ENCODE measurements at regions of chr21 and their contacts with region 1.

Region 1: GRCh38 chr21:16407403-16408240 is 677.8 kb downstream of the USP25 start:
- DNase-seq: no peak
- H3K4me3 ChIP-seq: no peak overlapping the region
- H3K4me3 Mint-ChIP-seq: no peak overlapping the region
- H3K27ac Mint-ChIP-seq: no peak overlapping the region
- H3K4me1 ChIP-seq: no peaks in the 10 kb centered on the region
- H3K4me1 Mint-ChIP-seq: no peaks in the 10 kb centered on the region
- H3K27me3 ChIP-seq: no peaks in the 10 kb centered on the region
- H3K27me3 Mint-ChIP-seq: peaks cover 11% of the 10 kb centered on the region
- CTCF ChIP-seq: no peak

Region 2: DNA sequence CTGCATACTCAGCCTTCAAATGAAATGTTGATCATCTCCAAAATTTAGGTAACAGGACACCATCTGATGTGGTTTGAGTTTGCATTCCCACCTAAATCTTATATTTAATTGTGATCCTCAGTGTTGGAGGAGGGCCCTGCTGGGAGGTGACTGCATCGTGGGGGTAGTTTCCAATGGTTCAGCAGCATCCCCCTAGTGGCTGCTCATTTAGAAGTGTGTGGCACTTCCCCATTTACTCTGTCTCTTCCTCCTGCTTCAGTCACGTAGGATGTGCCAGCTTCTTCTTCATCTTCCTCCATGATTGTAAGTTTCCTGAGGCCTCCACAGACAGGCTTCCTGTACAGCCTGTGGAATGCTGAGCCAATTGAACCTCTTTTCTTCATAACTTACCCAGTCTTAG is 53.3 kb after region 1 on chr21:
- CTCF ChIA-PET with region 1: no interaction called
- POLR2A ChIA-PET with region 1: no interaction called
- intact Hi-C with region 1: loop called (anchors 10 kb)
- DNase-seq: no peak
- H3K4me3 ChIP-seq: no peak overlapping the region
- H3K4me3 Mint-ChIP-seq: no peak overlapping the region
- H3K27ac Mint-ChIP-seq: no peak overlapping the region
- H3K4me1 ChIP-seq: no peaks in the 10 kb centered on the region
- H3K4me1 Mint-ChIP-seq: no peaks in the 10 kb centered on the region
- H3K27me3 ChIP-seq: no peaks in the 10 kb centered on the region
- H3K27me3 Mint-ChIP-seq: peaks cover 5% of the 10 kb centered on the region
- CTCF ChIP-seq: no peak

Measured in Caco-2 (cell line).